CD8-positive, alpha-beta T cell (primary cell): ENCODE measurements at regions of chr2 and their contacts with region 1.

Region 1: DNA sequence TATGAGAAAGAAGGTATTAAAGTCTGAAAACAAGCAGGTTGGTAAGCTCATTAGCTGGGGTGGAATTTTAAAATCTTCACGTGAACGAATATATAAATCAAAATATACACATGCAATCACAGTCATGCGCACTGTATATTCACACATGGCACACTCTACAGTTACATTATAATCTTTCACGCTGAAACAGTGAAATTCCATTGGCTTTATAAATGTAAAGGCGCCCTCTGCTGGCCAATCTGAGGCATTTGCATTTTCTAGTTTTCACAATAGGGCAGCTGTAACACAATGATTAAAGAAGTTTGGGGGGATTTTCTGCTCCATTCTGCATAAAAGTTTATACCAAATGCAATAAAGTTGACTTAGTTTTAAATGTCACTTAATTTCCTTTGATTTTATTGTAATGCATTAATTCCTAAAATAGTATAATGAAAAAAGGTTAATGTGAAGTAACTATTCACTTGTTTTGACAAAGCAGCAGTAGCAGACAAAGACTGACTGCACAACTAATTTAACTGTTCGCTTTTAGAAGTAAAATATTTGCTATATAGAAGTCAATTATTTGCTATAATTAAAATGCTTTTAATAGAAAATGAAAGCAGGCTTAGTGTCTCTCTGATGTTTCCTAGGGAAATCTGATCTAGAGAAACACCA is 17.2 kb downstream of the IFIH1 start:
- DNase-seq: peak in 8 of 9 experiments; percentile 37 to 78 (median 60)
- ATAC-seq: peak; percentile 83
- H3K4me3 ChIP-seq: no peak overlapping the region
- H3K4me3 Mint-ChIP-seq: no peak overlapping the region
- H3K27ac ChIP-seq: no peak overlapping the region
- H3K27ac Mint-ChIP-seq: no peak overlapping the region
- H3K4me1 ChIP-seq: no peaks in the 10 kb centered on the region
- H3K4me1 Mint-ChIP-seq: peaks cover 2% of the 10 kb centered on the region
- H3K27me3 ChIP-seq: no peaks in the 10 kb centered on the region
- H3K27me3 Mint-ChIP-seq: no peaks in the 10 kb centered on the region
- CTCF ChIP-seq: peak; percentile 98

Region 2: DNA sequence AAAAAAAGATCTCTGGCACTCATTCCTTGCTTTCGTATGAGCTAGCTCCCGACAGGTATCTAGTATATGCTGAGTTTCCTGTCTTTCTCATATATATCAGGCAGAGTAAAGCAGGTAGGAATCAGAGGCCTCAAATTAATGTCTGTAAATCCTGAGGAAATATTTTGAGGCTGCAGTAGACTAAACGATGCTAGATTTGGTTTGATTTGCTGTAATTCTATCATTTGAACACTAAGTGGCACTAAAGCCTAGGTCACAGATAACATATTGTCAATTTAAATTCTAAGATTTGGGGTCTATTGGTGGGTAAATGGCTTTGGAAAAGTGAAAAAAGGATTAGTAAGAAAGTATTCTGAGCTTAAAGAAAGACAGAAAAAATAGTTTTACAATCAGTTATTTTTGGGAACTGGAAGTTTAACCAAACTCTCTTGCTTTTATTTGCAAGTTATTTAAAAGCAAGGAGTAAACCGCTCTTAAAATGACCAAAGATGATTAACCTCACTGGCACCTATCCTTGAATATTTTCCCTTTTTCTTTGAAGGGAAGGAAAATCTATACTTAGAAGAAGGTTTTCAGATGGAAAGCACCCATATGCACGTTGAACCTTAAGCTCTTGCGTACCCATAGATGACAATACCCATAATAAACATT is 714.6 kb before region 1 on chr2:
- CTCF ChIA-PET with region 1: interaction called, 4 read pairs
- POLR2A ChIA-PET with region 1: no interaction called
- intact Hi-C with region 1: loop called (anchors 2 kb)
- DNase-seq: peak in 2 of 9 experiments; percentile 30 to 42
- ATAC-seq: peak; percentile 38
- H3K4me3 ChIP-seq: no peak overlapping the region
- H3K4me3 Mint-ChIP-seq: no peak overlapping the region
- H3K27ac ChIP-seq: no peak overlapping the region
- H3K27ac Mint-ChIP-seq: no peak overlapping the region
- H3K4me1 ChIP-seq: no peaks in the 10 kb centered on the region
- H3K4me1 Mint-ChIP-seq: no peaks in the 10 kb centered on the region
- H3K27me3 ChIP-seq: no peaks in the 10 kb centered on the region
- H3K27me3 Mint-ChIP-seq: no peaks in the 10 kb centered on the region
- CTCF ChIP-seq: peak; percentile 81

Region 3: GRCh38 chr2:162013514-162014475 is 287.5 kb before region 1 on chr2:
- CTCF ChIA-PET with region 1: no interaction called
- POLR2A ChIA-PET with region 1: no interaction called
- intact Hi-C with region 1: loop called in 1 of 2 experiments (anchors 5 kb)
- DNase-seq: peak in 3 of 9 experiments; percentile 25 to 60 (median 31)
- ATAC-seq: peak; percentile 32
- H3K4me3 ChIP-seq: no peak overlapping the region
- H3K4me3 Mint-ChIP-seq: peak overlapping the region; percentile 46
- H3K27ac ChIP-seq: peak overlapping the region; percentile 60 to 83
- H3K27ac Mint-ChIP-seq: peak overlapping the region; percentile 95
- H3K4me1 ChIP-seq: peaks cover 60% of the 10 kb centered on the region
- H3K4me1 Mint-ChIP-seq: peaks cover 74% of the 10 kb centered on the region
- H3K27me3 ChIP-seq: no peaks in the 10 kb centered on the region
- H3K27me3 Mint-ChIP-seq: no peaks in the 10 kb centered on the region
- CTCF ChIP-seq: no peak

Region 4: GRCh38 chr2:162221064-162221463 is 80.2 kb before region 1 on chr2:
- CTCF ChIA-PET with region 1: interaction called, 51 read pairs
- POLR2A ChIA-PET with region 1: no interaction called
- intact Hi-C with region 1: loop called (anchors 1 kb)
- DNase-seq: peak in 8 of 9 experiments; percentile 30 to 72 (median 56)
- ATAC-seq: peak; percentile 62
- H3K4me3 ChIP-seq: no peak overlapping the region
- H3K4me3 Mint-ChIP-seq: no peak overlapping the region
- H3K27ac ChIP-seq: no peak overlapping the region
- H3K27ac Mint-ChIP-seq: no peak overlapping the region
- H3K4me1 ChIP-seq: no peaks in the 10 kb centered on the region
- H3K4me1 Mint-ChIP-seq: no peaks in the 10 kb centered on the region
- H3K27me3 ChIP-seq: peaks cover 0 to 6% of the 10 kb centered on the region in 2 experiments
- H3K27me3 Mint-ChIP-seq: peaks cover 18% of the 10 kb centered on the region
- CTCF ChIP-seq: peak; percentile 81

Region 5: DNA sequence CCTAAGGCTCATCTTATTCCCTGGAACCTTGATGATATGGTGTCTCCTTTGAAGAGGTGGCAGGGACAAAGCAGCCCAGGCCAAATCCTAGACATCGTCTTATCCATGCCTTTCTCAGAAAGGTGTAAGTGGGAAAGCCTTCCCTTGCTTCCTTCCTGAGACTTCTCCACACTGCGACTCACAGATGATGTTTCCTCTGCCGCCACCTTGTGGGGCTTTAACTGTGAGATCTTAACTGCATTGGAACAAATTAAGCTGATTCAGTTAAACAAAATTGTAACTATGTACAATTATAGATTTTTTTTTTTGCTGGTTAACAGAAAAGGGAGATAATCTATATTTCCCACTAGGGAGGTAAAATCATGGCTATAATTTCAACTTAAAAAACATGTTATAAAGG is 32.7 kb after region 1 on chr2:
- CTCF ChIA-PET with region 1: interaction called, 11 read pairs
- POLR2A ChIA-PET with region 1: no interaction called
- intact Hi-C with region 1: no loop called
- DNase-seq: peak in 4 of 9 experiments; percentile 15 to 54 (median 37)
- ATAC-seq: peak; percentile 44
- H3K4me3 ChIP-seq: no peak overlapping the region
- H3K4me3 Mint-ChIP-seq: no peak overlapping the region
- H3K27ac ChIP-seq: no peak overlapping the region
- H3K27ac Mint-ChIP-seq: no peak overlapping the region
- H3K4me1 ChIP-seq: no peaks in the 10 kb centered on the region
- H3K4me1 Mint-ChIP-seq: no peaks in the 10 kb centered on the region
- H3K27me3 ChIP-seq: no peaks in the 10 kb centered on the region
- H3K27me3 Mint-ChIP-seq: no peaks in the 10 kb centered on the region
- CTCF ChIP-seq: peak; percentile 17